HepG2 (cell line): ENCODE measurements at regions of chr7 and their contacts with region 1.

Region 1: DNA sequence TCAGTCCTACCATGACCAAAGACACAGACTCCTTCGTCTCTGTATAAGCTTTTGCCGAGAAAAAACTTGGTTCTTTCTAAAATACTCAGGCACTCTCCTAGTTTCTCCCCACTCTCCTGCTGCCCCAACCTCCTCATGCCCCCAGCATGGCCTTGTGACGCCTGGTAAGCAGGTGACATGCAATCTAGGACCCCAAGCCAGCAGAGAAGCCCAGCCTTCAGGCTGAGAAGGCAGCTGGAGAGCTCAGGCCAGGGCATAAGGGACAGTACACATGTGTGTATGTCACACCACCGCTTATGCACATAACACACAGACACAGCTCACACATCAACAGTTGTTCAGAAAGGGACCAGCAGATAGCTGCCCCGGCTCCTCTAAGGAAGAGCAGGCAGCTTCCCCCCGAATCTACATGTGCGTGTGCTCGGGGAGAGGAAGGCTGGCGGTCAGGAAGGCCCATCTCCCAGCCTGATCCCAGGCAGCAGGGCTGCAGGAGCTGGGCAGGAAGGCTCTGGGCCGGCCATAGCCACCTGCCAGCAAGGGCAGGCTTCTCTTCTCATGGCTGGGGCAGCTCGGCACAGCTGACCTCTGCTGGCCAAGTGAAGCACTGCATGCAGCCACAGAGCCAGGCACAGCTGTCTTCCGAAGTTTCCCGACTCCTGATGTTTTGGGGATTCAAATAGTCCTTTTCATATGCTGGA is 8.5 kb downstream of the DDX56 start:
- DNase-seq: peak; percentile 44
- ATAC-seq: peak; percentile 76
- H3K4me3 ChIP-seq: no peak overlapping the region
- H3K27ac ChIP-seq: no peak overlapping the region
- H3K4me1 ChIP-seq: peaks cover 36% of the 10 kb centered on the region
- H3K27me3 ChIP-seq: no peaks in the 10 kb centered on the region
- CTCF ChIP-seq: peak; percentile 95
- EP300 ChIP-seq: no peak
- POLR2A ChIP-seq: peak in 1 of 2 experiments; percentile 33; a peak in 1 of 4 replicates
- RAD21 ChIP-seq: peak; percentile 88

Region 2: GRCh38 chr7:44072364-44073231 is 492.6 kb before region 1 on chr7:
- CTCF ChIA-PET with region 1: no interaction called
- POLR2A ChIA-PET with region 1: no interaction called
- in situ Hi-C with region 1: no loop called
- intact Hi-C with region 1: no loop called
- DNase-seq: peak; percentile 76
- ATAC-seq: peak; percentile 81
- H3K4me3 ChIP-seq: peak overlapping the region in 1 of 3 experiments; percentile 46; a peak in 1 of 6 replicates
- H3K27ac ChIP-seq: peak overlapping the region; percentile 54
- H3K4me1 ChIP-seq: peaks cover 34% of the 10 kb centered on the region
- H3K27me3 ChIP-seq: no peaks in the 10 kb centered on the region
- CTCF ChIP-seq: peak; percentile 62
- EP300 ChIP-seq: no peak
- POLR2A ChIP-seq: no peak
- RAD21 ChIP-seq: peak; percentile 66

Region 3: DNA sequence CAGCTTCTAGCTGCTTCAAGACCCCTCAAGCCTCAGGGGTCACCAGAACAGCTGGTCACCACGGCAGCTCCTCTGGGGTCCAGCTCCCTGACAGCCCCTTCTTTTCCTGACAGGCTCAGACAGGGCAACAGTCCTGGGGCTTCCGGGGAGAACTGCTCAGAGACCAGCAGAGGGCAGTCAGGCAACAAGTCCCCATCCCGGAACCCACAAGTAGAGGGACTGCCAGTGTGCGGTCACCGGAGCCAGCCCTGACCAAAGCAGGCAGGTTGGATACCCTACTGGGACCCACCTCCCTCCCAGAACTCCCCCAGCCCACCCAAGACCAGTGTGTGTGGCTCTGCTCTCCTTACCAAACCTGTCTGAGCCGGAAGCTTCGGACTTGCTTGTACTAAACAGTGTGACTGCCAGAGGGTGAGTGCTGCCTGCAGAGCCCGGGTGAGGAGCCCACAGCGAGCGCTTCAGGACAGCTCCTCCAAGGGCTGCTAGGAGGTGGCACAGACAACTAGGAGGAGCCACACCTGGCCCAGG is 324.2 kb before region 1 on chr7:
- CTCF ChIA-PET with region 1: interaction called, 8 read pairs
- POLR2A ChIA-PET with region 1: interaction called, 4 read pairs
- in situ Hi-C with region 1: no loop called
- intact Hi-C with region 1: loop called (anchors 1 kb)
- DNase-seq: peak; percentile 77
- ATAC-seq: peak; percentile 94
- H3K4me3 ChIP-seq: peak overlapping the region; percentile 38 to 69 (median 52); a peak in 5 of 6 replicates
- H3K27ac ChIP-seq: no peak overlapping the region
- H3K4me1 ChIP-seq: no peaks in the 10 kb centered on the region
- H3K27me3 ChIP-seq: peaks cover 23 to 69% of the 10 kb centered on the region in 2 experiments
- CTCF ChIP-seq: peak; percentile 91
- EP300 ChIP-seq: no peak
- POLR2A ChIP-seq: no peak
- RAD21 ChIP-seq: peak; percentile 69; the same call in 1 of the 2 replicates

Region 4: DNA sequence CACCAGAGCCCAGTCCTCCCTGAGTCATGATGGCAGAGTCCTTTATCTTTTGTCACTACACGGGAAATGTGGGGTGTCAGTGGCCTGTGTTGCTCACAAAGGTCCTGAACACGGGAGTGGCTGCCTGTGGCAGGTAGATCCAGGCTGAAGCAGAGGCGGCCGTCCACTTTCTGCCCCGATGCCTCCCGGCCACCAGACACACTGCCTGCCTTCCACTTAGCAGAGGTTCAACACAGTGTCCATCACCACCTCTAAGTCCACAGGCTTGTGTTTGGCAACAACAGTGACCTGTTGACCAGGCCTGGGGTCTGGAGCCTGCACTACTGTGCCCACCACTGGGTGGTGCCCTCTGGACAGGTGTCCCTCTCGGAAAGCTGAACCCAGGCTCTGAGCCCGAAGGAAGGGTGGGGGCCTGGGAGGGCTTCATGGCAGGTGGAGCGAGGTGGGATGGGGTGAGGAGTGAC is 190.0 kb before region 1 on chr7:
- CTCF ChIA-PET with region 1: no interaction called
- POLR2A ChIA-PET with region 1: no interaction called
- in situ Hi-C with region 1: no loop called
- intact Hi-C with region 1: loop called (anchors 1 kb)
- DNase-seq: peak; percentile 49
- ATAC-seq: peak; percentile 84
- H3K4me3 ChIP-seq: peak overlapping the region in 1 of 3 experiments; percentile 10; a peak in 1 of 6 replicates
- H3K27ac ChIP-seq: no peak overlapping the region
- H3K4me1 ChIP-seq: peaks cover 39% of the 10 kb centered on the region
- H3K27me3 ChIP-seq: peaks cover 0 to 6% of the 10 kb centered on the region in 2 experiments; a peak in 1 of 5 replicates
- CTCF ChIP-seq: peak; percentile 87
- EP300 ChIP-seq: no peak
- POLR2A ChIP-seq: no peak
- RAD21 ChIP-seq: peak; percentile 76

Region 5: GRCh38 chr7:44534501-44534900 is 30.7 kb before region 1 on chr7:
- CTCF ChIA-PET with region 1: interaction called, 14 read pairs
- POLR2A ChIA-PET with region 1: interaction called, 5 read pairs
- in situ Hi-C with region 1: no loop called
- intact Hi-C with region 1: no loop called
- DNase-seq: peak; percentile 54
- ATAC-seq: peak; percentile 82
- H3K4me3 ChIP-seq: no peak overlapping the region
- H3K27ac ChIP-seq: no peak overlapping the region
- H3K4me1 ChIP-seq: peaks cover 62% of the 10 kb centered on the region
- H3K27me3 ChIP-seq: no peaks in the 10 kb centered on the region
- CTCF ChIP-seq: peak; percentile 69
- EP300 ChIP-seq: no peak
- POLR2A ChIP-seq: no peak
- RAD21 ChIP-seq: no peak

Region 6: GRCh38 chr7:44541028-44541869 is 24.0 kb before region 1 on chr7 and contains the start of gene NPC1L1:
- CTCF ChIA-PET with region 1: interaction called, 3 read pairs
- POLR2A ChIA-PET with region 1: interaction called, 25 read pairs
- in situ Hi-C with region 1: no loop called
- intact Hi-C with region 1: loop called (anchors 2 kb)
- DNase-seq: peak; percentile 91
- ATAC-seq: peak; percentile 94
- H3K4me3 ChIP-seq: peak within 1 kb of the TSS; percentile 57 to 79 (median 63)
- H3K27ac ChIP-seq: peak within 1 kb of the TSS; percentile 94
- H3K4me1 ChIP-seq: peaks cover 84% of the 10 kb centered on the region
- H3K27me3 ChIP-seq: no peaks in the 10 kb centered on the region
- CTCF ChIP-seq: peak; percentile 16; the same call in 1 of the 2 replicates
- EP300 ChIP-seq: 0 out of 4 replicates have a peak, but pooled peaks of 1 of the 2 experiments have one; percentile 39
- POLR2A ChIP-seq: peak in 1 of 2 experiments; percentile 96; a peak in 2 of 4 replicates
- RAD21 ChIP-seq: no peak; the same call in 1 of the 2 replicates
- total RNA-seq, gene NPC1L1: 3.8 and 4.8 TPM in 2 replicates